WTC11 (cell line): ENCODE measurements at regions of chr17 and their contacts with region 1.

Region 1: DNA sequence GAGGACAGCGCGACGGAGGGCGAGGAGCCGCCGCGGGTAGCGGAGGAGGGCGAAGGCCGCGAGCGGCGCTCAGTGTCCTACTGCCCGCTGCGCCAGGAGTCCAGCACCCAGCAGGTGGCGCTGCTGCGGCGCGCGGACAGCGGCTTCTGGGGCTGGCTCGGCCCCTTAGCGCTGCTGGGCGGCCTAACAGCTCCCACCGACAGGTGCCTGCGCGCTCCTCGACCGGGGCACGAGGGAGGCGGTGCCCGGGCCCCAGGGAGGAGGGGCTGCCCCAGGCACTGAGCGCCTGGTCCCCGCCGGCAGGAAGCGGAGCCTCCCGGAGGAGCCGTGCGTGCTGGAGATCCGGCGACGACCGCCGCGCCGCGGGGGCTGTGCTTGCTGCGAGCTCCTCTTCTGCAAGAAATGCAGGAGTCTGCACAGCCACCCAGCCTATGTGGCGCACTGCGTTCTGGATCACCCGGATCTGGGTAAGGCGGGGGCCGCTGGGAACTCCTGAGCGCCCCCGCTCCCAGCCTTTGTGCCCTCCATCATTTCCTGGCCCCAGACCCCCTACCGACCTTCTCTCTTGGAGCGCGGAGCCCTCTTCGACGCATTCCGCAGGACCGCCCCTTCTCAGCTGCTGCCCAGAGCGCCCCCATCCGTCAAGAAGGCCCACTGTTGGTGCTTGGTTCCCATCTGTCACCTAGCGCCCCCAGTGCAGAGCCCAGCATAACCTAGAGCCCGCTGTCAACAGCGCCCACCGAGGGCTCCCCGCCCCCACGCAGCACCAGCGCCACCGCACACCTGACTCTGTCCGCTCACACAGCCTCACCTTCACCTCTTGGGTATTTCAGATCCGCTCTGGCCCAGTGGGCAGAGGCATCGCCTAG is 3.7 kb downstream of the C17orf50 start:
- DNase-seq: peak; percentile 91
- ATAC-seq: peak; percentile 87
- H3K4me3 Mint-ChIP-seq: peak overlapping the region; percentile 80
- H3K27ac Mint-ChIP-seq: peak overlapping the region; percentile 76
- H3K4me1 Mint-ChIP-seq: peaks cover 17% of the 10 kb centered on the region
- H3K27me3 Mint-ChIP-seq: peaks cover 11% of the 10 kb centered on the region
- CTCF ChIP-seq: peak; percentile 83

Region 2: DNA sequence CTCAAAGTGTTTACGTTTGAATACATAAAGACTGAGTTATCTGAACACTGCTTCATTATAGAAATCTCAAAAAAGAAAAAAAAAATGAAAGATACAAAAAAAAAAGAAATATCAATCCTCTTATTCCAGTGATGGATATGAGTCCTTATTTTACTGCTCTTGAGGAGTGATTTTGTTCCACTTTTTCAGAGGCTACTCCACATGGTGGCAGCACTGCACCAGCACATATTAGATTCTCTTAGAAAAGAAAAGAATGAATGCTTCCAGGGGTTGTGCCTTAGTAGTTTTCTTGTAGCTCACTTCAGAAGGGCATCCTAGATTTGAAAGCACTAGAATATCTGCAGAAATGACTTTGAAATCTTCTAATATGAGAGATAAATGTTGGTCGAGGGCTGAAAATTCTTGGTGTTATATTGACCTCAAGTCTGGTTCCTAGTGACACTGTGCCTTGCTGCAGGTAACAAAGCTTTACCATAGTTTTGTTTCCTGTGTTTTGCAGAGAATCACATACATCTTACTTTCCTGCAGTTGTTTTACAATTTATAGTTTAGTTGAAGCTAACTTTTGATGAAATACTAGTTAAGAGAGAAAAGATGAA is 151.3 kb before region 1 on chr17:
- CTCF ChIA-PET with region 1: interaction called, 12 read pairs
- POLR2A ChIA-PET with region 1: no interaction called
- DNase-seq: peak; percentile 46
- ATAC-seq: 0 out of 2 replicates have a peak, but pooled peaks have one; percentile 36
- H3K4me3 Mint-ChIP-seq: no peak overlapping the region
- H3K27ac Mint-ChIP-seq: no peak overlapping the region
- H3K4me1 Mint-ChIP-seq: no peaks in the 10 kb centered on the region
- H3K27me3 Mint-ChIP-seq: no peaks in the 10 kb centered on the region
- CTCF ChIP-seq: no peak

Region 3: GRCh38 chr17:35731239-35731931 is 33.0 kb before region 1 on chr17 and contains the start of gene RASL10B:
- CTCF ChIA-PET with region 1: interaction called, 34 read pairs
- POLR2A ChIA-PET with region 1: interaction called, 4 read pairs
- DNase-seq: peak; percentile 80
- ATAC-seq: peak; percentile 75
- H3K4me3 Mint-ChIP-seq: peak within 1 kb of the TSS; percentile 85
- H3K27ac Mint-ChIP-seq: no peak within 1 kb of the TSS
- H3K4me1 Mint-ChIP-seq: peaks cover 39% of the 10 kb centered on the region
- H3K27me3 Mint-ChIP-seq: peaks cover 16% of the 10 kb centered on the region
- CTCF ChIP-seq: no peak
- total RNA-seq, gene RASL10B: 17.4 to 25.4 TPM (median 25.3 TPM) in 3 replicates

Region 4: DNA sequence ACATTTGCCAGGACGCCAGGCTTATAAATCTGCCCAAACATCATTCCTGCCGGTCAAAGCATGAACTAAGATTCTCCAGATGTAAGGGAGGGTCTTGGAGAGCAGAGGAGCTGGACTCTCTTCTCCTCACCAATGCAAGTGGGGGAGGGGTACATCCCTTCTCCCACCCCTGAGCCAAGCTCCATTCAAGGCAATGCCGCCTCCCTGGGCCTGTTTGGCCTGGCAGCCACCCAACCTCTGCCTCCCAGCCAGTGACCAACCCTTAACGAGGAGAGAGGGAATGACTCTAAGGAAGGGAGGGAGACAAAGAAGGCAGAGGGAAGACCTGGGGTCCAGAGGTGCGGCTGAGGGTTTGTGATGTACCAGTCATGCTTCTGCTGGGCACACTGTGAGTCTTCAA is 10.1 kb after region 1 on chr17:
- CTCF ChIA-PET with region 1: interaction called, 60 read pairs
- POLR2A ChIA-PET with region 1: interaction called, 7 read pairs
- DNase-seq: no peak
- ATAC-seq: no peak; the same call in 1 of the 2 replicates
- H3K4me3 Mint-ChIP-seq: no peak overlapping the region
- H3K27ac Mint-ChIP-seq: no peak overlapping the region
- H3K4me1 Mint-ChIP-seq: peaks cover 33% of the 10 kb centered on the region
- H3K27me3 Mint-ChIP-seq: no peaks in the 10 kb centered on the region
- CTCF ChIP-seq: no peak

Region 5: DNA sequence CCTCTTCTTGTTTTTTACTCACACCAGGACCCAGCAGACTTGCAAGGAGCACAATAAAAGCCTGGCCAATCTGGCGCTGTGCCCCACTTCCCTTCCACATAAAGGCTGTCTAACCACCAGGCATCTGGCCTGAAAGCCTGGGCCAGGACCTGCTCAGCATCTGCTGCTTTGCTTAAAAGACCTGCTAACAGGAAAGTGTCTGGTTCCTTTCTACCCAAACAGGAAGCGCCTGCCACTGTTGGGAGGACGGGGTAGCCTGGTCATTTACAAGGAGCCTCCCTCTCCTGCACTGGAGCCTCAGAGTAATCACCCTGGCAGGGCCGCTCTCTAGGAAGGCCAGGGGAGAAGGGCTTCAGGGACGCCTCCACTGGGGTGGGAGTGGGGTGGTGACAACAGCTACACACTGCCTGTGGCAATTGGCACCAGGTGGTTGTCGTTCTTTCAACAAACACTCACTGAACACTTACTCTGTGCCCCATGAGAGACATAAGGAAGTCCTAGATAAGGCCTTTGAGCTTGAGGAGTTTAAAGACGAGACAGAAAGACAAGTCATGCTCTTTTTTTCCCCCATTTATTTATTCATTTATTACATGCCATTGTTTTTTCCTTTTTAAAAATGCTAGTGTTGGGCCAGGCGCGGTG is 37.3 kb after region 1 on chr17:
- CTCF ChIA-PET with region 1: interaction called, 71 read pairs
- POLR2A ChIA-PET with region 1: interaction called, 3 read pairs
- DNase-seq: no peak
- ATAC-seq: no peak
- H3K4me3 Mint-ChIP-seq: no peak overlapping the region
- H3K27ac Mint-ChIP-seq: no peak overlapping the region
- H3K4me1 Mint-ChIP-seq: peaks cover 3% of the 10 kb centered on the region; the same call in 1 of the 2 replicates
- H3K27me3 Mint-ChIP-seq: peaks cover 31% of the 10 kb centered on the region
- CTCF ChIP-seq: no peak

Region 6: DNA sequence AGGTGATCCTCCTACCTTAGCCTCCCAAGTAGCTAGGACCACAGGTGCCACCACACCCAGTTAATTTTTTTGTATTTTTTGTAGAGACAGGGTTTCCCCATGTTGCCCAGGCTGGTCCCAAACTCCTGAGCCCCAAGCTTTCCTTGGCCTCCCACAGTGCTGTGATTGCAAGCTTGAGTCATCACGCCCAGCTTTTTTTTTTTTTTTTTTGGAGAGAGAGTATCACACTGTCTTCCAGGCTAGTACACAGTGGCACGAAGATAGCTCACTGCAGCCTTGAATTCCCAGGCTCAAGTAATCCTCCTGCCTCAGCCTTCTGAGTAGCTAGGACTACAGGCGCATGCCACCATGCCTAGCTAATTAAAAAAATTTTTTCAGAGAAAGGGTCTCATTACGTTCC is 77.1 kb after region 1 on chr17:
- CTCF ChIA-PET with region 1: interaction called, 12 read pairs
- POLR2A ChIA-PET with region 1: interaction called, 3 read pairs
- DNase-seq: no peak
- ATAC-seq: no peak
- H3K4me3 Mint-ChIP-seq: no peak overlapping the region
- H3K27ac Mint-ChIP-seq: no peak overlapping the region
- H3K4me1 Mint-ChIP-seq: no peaks in the 10 kb centered on the region
- H3K27me3 Mint-ChIP-seq: no peaks in the 10 kb centered on the region
- CTCF ChIP-seq: no peak